Heart left ventricle (tissue), 16 donors: ENCODE measurements at regions of chr2 and their contacts with region 1.

Region 1: DNA sequence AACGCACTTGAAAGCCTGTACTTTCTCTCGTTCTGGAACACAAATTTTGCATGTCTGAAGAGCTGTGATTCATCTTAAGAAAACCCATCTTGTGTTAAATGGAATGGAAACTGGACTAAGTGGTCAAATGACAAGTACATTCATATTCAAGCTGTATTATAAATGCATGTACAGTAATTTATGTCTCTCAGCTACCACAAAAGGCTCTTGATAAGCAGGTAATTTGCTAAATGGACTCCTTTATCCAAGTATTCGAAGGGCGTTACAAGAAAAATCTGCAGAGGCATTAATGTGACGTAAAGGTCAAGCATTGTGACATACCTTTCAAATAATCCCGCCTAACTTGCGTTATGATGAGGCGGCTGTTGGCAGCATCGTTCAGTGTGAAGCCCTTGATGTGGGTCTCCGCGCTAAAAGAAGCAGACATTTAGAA is 66.6 kb downstream of the ABCG8 start:
- DNase-seq: no peak
- ATAC-seq: no peak
- H3K4me3 ChIP-seq: no peak overlapping the region
- H3K27ac ChIP-seq: no peak overlapping the region
- H3K4me1 ChIP-seq: no peaks in the 10 kb centered on the region
- H3K27me3 ChIP-seq: no peaks in the 10 kb centered on the region
- CTCF ChIP-seq: no peak
- POLR2A ChIP-seq: no peak

Region 2: DNA sequence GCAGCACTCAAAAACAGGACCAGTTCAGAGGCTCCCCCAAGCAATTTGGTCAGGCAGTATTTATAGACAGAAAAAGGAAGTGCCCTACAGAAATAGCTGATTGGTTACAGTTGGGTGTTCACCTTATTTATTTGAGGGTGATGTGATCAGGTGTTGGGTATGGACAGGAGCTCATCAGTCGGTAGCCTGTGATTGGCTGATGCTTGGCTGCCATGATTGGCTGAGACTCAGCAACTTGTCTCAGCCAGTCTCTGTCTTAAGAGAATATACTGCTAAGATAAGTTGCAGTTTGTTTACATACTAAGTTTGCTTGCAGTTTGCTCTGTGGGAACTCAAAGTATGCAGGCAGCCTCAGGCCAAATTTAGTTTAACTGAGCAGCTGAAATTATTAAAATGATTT is 57.2 kb before region 1 on chr2:
- intact Hi-C with region 1: no loop called
- DNase-seq: no peak
- ATAC-seq: no peak
- H3K4me3 ChIP-seq: no peak overlapping the region
- H3K27ac ChIP-seq: no peak overlapping the region
- H3K4me1 ChIP-seq: no peaks in the 10 kb centered on the region
- H3K27me3 ChIP-seq: peaks cover 0 to 15% (median 2%) of the 10 kb centered on the region in 9 donors
- CTCF ChIP-seq: no peak
- POLR2A ChIP-seq: no peak

Region 3: GRCh38 chr2:43977677-43978375 is 72.4 kb after region 1 on chr2:
- intact Hi-C with region 1: loop called in 1 of 10 experiments (anchors 10 kb)
- DNase-seq: no peak
- ATAC-seq: no peak
- H3K4me3 ChIP-seq: no peak overlapping the region
- H3K27ac ChIP-seq: no peak overlapping the region
- H3K4me1 ChIP-seq: no peaks in the 10 kb centered on the region
- H3K27me3 ChIP-seq: no peaks in the 10 kb centered on the region
- CTCF ChIP-seq: no peak
- POLR2A ChIP-seq: no peak

Region 4: DNA sequence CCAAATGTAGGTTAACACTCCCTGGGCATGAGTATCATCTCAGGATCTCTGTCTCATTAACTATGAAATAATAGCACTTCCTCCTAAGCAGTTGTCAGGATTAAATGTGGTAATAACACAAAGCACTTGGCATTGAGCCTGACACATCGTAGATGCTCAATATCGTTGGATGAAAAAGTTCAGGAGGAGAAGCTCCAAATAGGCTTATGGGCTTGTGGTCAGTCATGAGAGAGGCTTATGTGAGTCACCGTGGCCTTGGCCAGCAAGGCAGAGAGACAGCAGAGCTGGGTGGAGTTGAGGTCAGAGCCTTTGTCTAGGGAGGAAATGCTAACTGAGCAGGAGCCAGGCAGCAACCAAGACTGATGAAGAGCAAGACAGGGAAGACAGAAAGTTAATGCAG is 195.0 kb after region 1 on chr2:
- intact Hi-C with region 1: no loop called
- DNase-seq: peak; percentile 36 to 74 (median 66)
- ATAC-seq: peak; percentile 45 to 95 (median 93)
- H3K4me3 ChIP-seq: no peak overlapping the region
- H3K27ac ChIP-seq: peak overlapping the region in 1 of 12 donors; percentile 49
- H3K4me1 ChIP-seq: peaks cover 0 to 17% (median 9%) of the 10 kb centered on the region in 12 donors
- H3K27me3 ChIP-seq: no peaks in the 10 kb centered on the region
- CTCF ChIP-seq: no peak
- POLR2A ChIP-seq: no peak